ENCODE measurements at regions of chr19 and their contacts with region 1.

Region 1: GRCh38 chr19:3047425-3048189 is 14.7 kb downstream of the TLE5 start:
- DNase-seq: peak; percentile 58 to 90 (median 79)
- ATAC-seq: peak; percentile 98
- H3K4me3 ChIP-seq: peak overlapping the region; percentile 60
- H3K4me3 Mint-ChIP-seq: peak overlapping the region; percentile 96
- H3K27ac ChIP-seq: peak overlapping the region in 1 of 2 donors; percentile 9
- H3K27ac Mint-ChIP-seq: peak overlapping the region; percentile 96
- H3K4me1 ChIP-seq: peaks cover 34% of the 10 kb centered on the region
- H3K4me1 Mint-ChIP-seq: peaks cover 38% of the 10 kb centered on the region
- H3K27me3 ChIP-seq: no peaks in the 10 kb centered on the region
- H3K27me3 Mint-ChIP-seq: no peaks in the 10 kb centered on the region
- CTCF ChIP-seq: no peak

Region 2: GRCh38 chr19:3094601-3095437 is 47.2 kb after region 1 on chr19:
- CTCF ChIA-PET with region 1: no interaction called
- POLR2A ChIA-PET with region 1: no interaction called
- intact Hi-C with region 1: no loop called
- DNase-seq: peak in 6 of 14 experiments; percentile 16 to 69 (median 38)
- ATAC-seq: no peak
- H3K4me3 ChIP-seq: peak overlapping the region; percentile 34
- H3K4me3 Mint-ChIP-seq: peak overlapping the region; percentile 94
- H3K27ac ChIP-seq: no peak overlapping the region
- H3K27ac Mint-ChIP-seq: peak overlapping the region; percentile 86
- H3K4me1 ChIP-seq: peaks cover 44% of the 10 kb centered on the region
- H3K4me1 Mint-ChIP-seq: peaks cover 32% of the 10 kb centered on the region
- H3K27me3 ChIP-seq: peaks cover 3 to 28% of the 10 kb centered on the region in 2 experiments
- H3K27me3 Mint-ChIP-seq: peaks cover 18% of the 10 kb centered on the region
- CTCF ChIP-seq: no peak

Region 3: GRCh38 chr19:3176603-3177501 is 129.2 kb after region 1 on chr19:
- CTCF ChIA-PET with region 1: no interaction called
- POLR2A ChIA-PET with region 1: no interaction called
- intact Hi-C with region 1: loop called in 1 of 2 experiments (anchors 5 kb)
- DNase-seq: peak; percentile 40 to 86 (median 76)
- ATAC-seq: peak; percentile 72
- H3K4me3 ChIP-seq: peak overlapping the region; percentile 52
- H3K4me3 Mint-ChIP-seq: peak overlapping the region; percentile 88
- H3K27ac ChIP-seq: peak overlapping the region; percentile 71 to 81
- H3K27ac Mint-ChIP-seq: peak overlapping the region; percentile 100
- H3K4me1 ChIP-seq: peaks cover 38% of the 10 kb centered on the region
- H3K4me1 Mint-ChIP-seq: peaks cover 32% of the 10 kb centered on the region
- H3K27me3 ChIP-seq: no peaks in the 10 kb centered on the region
- H3K27me3 Mint-ChIP-seq: no peaks in the 10 kb centered on the region
- CTCF ChIP-seq: no peak

Region 4: DNA sequence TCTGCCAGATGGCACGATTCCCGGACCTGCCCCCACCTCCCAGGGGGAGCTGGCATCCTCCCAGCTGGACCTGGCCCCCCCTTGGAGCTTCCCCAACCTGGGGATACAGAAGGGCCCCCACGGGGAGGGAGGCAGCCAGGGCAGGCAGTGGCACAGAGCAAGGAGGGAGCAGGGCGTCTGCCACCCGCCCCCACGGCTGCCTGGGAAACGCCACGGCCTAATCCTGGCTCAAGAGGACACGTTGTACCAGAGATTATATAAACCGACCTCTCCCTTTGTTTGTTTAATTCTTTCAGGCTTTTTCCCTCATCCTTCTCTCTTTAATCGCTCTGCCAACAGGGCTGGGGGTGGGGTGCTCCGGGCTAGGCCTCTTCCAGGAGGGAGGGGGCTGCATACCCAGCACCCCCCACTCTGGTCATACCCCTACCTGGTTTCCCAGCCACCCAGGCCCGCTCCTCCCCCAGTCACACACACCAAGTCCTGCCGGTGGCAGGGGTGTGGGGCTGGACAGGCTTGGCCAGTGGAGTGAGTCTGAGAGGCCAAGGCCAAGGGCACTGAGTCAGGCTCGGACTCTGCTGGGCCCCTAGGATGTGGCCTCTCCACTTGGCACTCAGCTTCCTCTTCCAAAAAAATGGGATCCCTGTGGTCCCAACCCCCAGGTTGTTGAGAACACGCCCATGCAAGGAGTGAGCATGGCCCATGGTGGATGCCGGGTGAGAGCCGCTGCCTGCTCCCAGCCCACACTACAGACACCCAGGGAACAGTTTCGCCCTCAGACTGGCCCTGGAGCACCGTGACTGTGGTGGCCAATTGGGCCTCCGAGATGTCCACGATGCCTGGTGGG is 289.3 kb after region 1 on chr19:
- CTCF ChIA-PET with region 1: no interaction called
- POLR2A ChIA-PET with region 1: no interaction called
- intact Hi-C with region 1: no loop called
- DNase-seq: no peak
- ATAC-seq: no peak
- H3K4me3 ChIP-seq: no peak overlapping the region
- H3K4me3 Mint-ChIP-seq: no peak overlapping the region
- H3K27ac ChIP-seq: no peak overlapping the region
- H3K27ac Mint-ChIP-seq: peak overlapping the region; percentile 49
- H3K4me1 ChIP-seq: peaks cover 22% of the 10 kb centered on the region
- H3K4me1 Mint-ChIP-seq: peaks cover 11% of the 10 kb centered on the region
- H3K27me3 ChIP-seq: no peaks in the 10 kb centered on the region
- H3K27me3 Mint-ChIP-seq: no peaks in the 10 kb centered on the region
- CTCF ChIP-seq: no peak

Measured in CD4-positive, alpha-beta T cell (primary cell).